ENCODE measurements at regions of chr14 and their contacts with region 1.

Region 1: GRCh38 chr14:67919259-67920032 is 99.9 kb downstream of the RAD51B start:
- DNase-seq: no peak
- ATAC-seq: no peak
- H3K4me3 ChIP-seq: no peak overlapping the region
- H3K4me3 Mint-ChIP-seq: no peak overlapping the region
- H3K27ac ChIP-seq: no peak overlapping the region
- H3K27ac Mint-ChIP-seq: no peak overlapping the region
- H3K4me1 ChIP-seq: no peaks in the 10 kb centered on the region
- H3K4me1 Mint-ChIP-seq: no peaks in the 10 kb centered on the region
- H3K27me3 ChIP-seq: no peaks in the 10 kb centered on the region
- H3K27me3 Mint-ChIP-seq: no peaks in the 10 kb centered on the region

Region 2: GRCh38 chr14:67883717-67884116 is 35.7 kb before region 1 on chr14:
- CTCF ChIA-PET with region 1: no interaction called
- POLR2A ChIA-PET with region 1: no interaction called
- intact Hi-C with region 1: no loop called
- DNase-seq: peak in 4 of 9 donors; percentile 3 to 9 (median 6)
- ATAC-seq: no peak
- H3K4me3 ChIP-seq: no peak overlapping the region
- H3K4me3 Mint-ChIP-seq: no peak overlapping the region
- H3K27ac ChIP-seq: no peak overlapping the region
- H3K27ac Mint-ChIP-seq: no peak overlapping the region
- H3K4me1 ChIP-seq: peaks cover 0 to 14% of the 10 kb centered on the region in 2 donors
- H3K4me1 Mint-ChIP-seq: peaks cover 13 to 36% (median 28%) of the 10 kb centered on the region in 7 donors
- H3K27me3 ChIP-seq: no peaks in the 10 kb centered on the region
- H3K27me3 Mint-ChIP-seq: no peaks in the 10 kb centered on the region

Region 3: DNA sequence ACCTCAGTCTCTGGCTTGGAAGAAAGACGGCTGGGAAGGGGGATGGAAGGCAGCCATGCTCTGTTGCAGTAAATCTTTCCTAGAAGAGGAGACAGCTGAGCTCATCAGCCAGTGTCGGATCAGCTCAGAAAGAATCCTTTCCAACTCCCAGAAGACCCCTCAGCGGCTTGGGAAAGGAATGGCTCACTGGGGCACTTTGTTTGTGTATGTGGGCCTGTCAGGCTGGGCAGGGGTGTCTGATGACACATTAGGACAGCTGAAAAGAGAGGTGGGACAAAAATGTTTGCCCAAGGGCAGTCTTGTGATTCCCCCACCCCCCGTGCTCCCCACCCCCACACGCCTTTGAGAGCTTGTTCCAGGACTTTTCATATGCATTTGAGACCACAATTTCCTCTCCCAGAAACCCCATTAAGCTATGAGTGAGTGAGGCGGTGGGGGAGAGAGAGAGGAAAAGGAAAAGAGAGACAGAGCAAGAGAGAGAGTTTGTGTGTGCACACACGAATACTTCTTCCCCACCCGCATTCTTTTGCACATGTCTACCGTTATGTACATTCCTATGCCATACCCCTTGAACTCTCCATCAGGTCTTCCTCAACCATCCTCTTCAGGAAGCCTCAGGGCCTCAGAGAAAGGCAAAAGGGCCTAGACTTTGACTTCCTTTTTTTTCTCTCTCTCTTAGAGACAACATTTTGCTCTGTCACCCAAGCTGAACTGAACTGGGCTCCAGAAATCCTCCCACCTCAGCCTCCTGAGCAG is 674.5 kb after region 1 on chr14:
- CTCF ChIA-PET with region 1: no interaction called
- POLR2A ChIA-PET with region 1: no interaction called
- intact Hi-C with region 1: loop called in 1 of 2 experiments (anchors 5 kb)
- DNase-seq: no peak
- ATAC-seq: peak; percentile 28
- H3K4me3 ChIP-seq: no peak overlapping the region
- H3K4me3 Mint-ChIP-seq: peak overlapping the region in 3 of 10 donors; percentile 33 to 79 (median 46)
- H3K27ac ChIP-seq: no peak overlapping the region
- H3K27ac Mint-ChIP-seq: peak overlapping the region in 7 of 9 donors; percentile 20 to 89 (median 50)
- H3K4me1 ChIP-seq: peaks cover 0 to 11% of the 10 kb centered on the region in 2 donors
- H3K4me1 Mint-ChIP-seq: peaks cover 6 to 35% (median 22%) of the 10 kb centered on the region in 7 donors
- H3K27me3 ChIP-seq: no peaks in the 10 kb centered on the region
- H3K27me3 Mint-ChIP-seq: no peaks in the 10 kb centered on the region

Measured in naive thymus-derived CD4-positive, alpha-beta T cell (primary cell).